Activated B cell treated with CpG ODN at 0.5 μM for 24 hours (primary cell): ENCODE measurements at regions of chr15 and their contacts with region 1.

Region 1: GRCh38 chr15:40421246-40422157 is 15.9 kb downstream of the IVD start:
- DNase-seq: peak; percentile 77
- ATAC-seq: peak; percentile 97
- H3K4me3 Mint-ChIP-seq: no peak overlapping the region
- H3K27ac Mint-ChIP-seq: no peak overlapping the region
- H3K4me1 Mint-ChIP-seq: peaks cover 2% of the 10 kb centered on the region
- H3K27me3 Mint-ChIP-seq: no peaks in the 10 kb centered on the region
- CTCF ChIP-seq: peak; percentile 86

Region 2: DNA sequence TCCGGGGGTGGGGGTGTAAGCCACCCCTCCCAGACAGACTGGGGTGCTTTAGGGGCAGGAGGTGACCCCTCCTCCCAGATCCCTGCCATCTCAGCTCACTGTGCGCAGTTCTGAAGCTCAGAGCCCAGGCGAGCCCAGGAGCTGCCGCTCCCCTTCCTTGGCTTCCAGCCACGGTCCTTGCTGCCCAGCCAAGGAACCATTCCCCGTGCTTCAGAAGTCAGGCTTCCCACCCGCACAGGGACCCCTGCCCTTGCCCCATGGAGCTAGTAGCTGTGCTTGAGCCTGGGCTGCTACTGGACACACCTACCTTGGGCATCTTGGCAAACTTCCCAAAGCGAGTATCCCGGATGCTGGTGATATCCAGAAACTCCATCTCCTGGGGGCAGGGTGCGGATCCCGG is 118.5 kb before region 1 on chr15:
- CTCF ChIA-PET with region 1: no interaction called
- POLR2A ChIA-PET with region 1: no interaction called
- intact Hi-C with region 1: no loop called
- DNase-seq: no peak
- ATAC-seq: no peak
- H3K4me3 Mint-ChIP-seq: no peak overlapping the region
- H3K27ac Mint-ChIP-seq: no peak overlapping the region
- H3K4me1 Mint-ChIP-seq: peaks cover 24% of the 10 kb centered on the region
- H3K27me3 Mint-ChIP-seq: no peaks in the 10 kb centered on the region
- CTCF ChIP-seq: no peak

Region 3: GRCh38 chr15:40323239-40323952 is 98.1 kb before region 1 on chr15 and contains the start of gene INAFM2:
- CTCF ChIA-PET with region 1: interaction called, 5 read pairs
- POLR2A ChIA-PET with region 1: interaction called, 5 read pairs
- intact Hi-C with region 1: loop called (anchors 1 kb)
- DNase-seq: peak; percentile 88
- ATAC-seq: peak; percentile 92
- H3K4me3 Mint-ChIP-seq: peak within 1 kb of the TSS; percentile 80
- H3K27ac Mint-ChIP-seq: peak within 1 kb of the TSS; percentile 65
- H3K4me1 Mint-ChIP-seq: peaks cover 29% of the 10 kb centered on the region
- H3K27me3 Mint-ChIP-seq: no peaks in the 10 kb centered on the region
- CTCF ChIP-seq: no peak
- total RNA-seq, gene INAFM2: 9.5 TPM in 2 replicates

Region 4: GRCh38 chr15:40344631-40345120 is 76.8 kb before region 1 on chr15:
- CTCF ChIA-PET with region 1: interaction called, 113 read pairs
- POLR2A ChIA-PET with region 1: no interaction called
- intact Hi-C with region 1: loop called (anchors 1 kb)
- DNase-seq: peak; percentile 46
- ATAC-seq: peak; percentile 95
- H3K4me3 Mint-ChIP-seq: no peak overlapping the region
- H3K27ac Mint-ChIP-seq: no peak overlapping the region
- H3K4me1 Mint-ChIP-seq: no peaks in the 10 kb centered on the region
- H3K27me3 Mint-ChIP-seq: no peaks in the 10 kb centered on the region
- CTCF ChIP-seq: peak; percentile 16

Region 5: DNA sequence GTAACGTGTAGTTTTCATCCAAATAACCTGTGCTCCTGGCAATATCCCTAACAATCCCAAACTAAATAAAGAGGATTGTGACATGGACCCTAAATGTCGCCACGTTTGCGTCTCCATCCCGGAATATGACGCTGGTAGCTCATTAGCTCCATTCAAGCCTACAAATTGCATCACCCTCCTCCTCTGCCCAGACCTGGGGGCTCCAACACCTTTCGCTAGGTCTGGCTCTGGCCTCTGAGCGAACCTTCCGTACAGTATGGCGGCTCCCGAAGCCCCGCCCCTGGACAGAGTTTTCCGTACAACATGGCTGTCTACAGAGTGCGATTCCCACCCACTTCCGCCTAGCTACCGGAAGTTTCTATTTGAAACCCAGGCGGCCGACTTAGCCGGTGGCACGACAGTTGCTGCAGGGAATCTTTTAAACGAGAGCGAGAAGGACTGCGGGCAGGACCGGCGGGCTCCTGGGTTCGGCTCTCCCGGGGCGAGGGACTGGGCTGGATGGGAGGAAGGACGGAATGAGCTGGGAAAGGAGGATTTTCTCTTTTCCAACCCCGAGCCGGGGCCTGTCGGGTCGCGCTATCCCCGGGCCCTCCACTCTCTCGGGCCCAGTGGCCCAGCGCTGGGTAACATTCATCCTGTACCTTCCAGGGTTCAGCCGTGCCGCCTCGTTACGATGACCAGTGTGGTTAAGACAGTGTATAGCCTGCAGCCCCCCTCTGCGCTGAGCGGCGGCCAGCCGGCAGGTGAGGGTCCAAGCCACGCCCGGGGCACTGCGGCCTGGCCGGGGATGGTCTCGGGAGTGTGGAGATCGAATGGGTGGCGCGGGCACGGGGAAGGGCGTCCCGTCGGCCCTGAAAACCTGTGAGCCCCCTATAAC is 38.7 kb before region 1 on chr15 and contains the start of gene KNSTRN:
- CTCF ChIA-PET with region 1: no interaction called
- POLR2A ChIA-PET with region 1: no interaction called
- intact Hi-C with region 1: loop called (anchors 5 kb)
- DNase-seq: peak; percentile 83
- ATAC-seq: peak; percentile 99
- H3K4me3 Mint-ChIP-seq: peak within 1 kb of the TSS; percentile 96
- H3K27ac Mint-ChIP-seq: peak within 1 kb of the TSS; percentile 73
- H3K4me1 Mint-ChIP-seq: peaks cover 12% of the 10 kb centered on the region
- H3K27me3 Mint-ChIP-seq: no peaks in the 10 kb centered on the region
- CTCF ChIP-seq: no peak
- total RNA-seq, gene KNSTRN: 11.5 and 13.4 TPM in 2 replicates